Caco-2 (cell line): ENCODE measurements at regions of chr16 and their contacts with region 1.

Region 1: GRCh38 chr16:58025351-58026138 is at the start of gene MMP15:
- DNase-seq: peak; percentile 99 to 100
- H3K4me3 ChIP-seq: peak within 1 kb of the TSS; percentile 74
- H3K4me3 Mint-ChIP-seq: peak within 1 kb of the TSS; percentile 81
- H3K27ac Mint-ChIP-seq: peak within 1 kb of the TSS; percentile 95
- H3K4me1 ChIP-seq: peaks cover 16% of the 10 kb centered on the region
- H3K4me1 Mint-ChIP-seq: peaks cover 14% of the 10 kb centered on the region
- H3K27me3 ChIP-seq: no peaks in the 10 kb centered on the region
- H3K27me3 Mint-ChIP-seq: no peaks in the 10 kb centered on the region
- CTCF ChIP-seq: no peak
- total RNA-seq, gene MMP15: 27.0 and 27.3 TPM in 2 replicates

Region 2: GRCh38 chr16:57994778-57995177 is 30.8 kb before region 1 on chr16:
- CTCF ChIA-PET with region 1: interaction called, 13 read pairs
- POLR2A ChIA-PET with region 1: interaction called, 6 read pairs
- intact Hi-C with region 1: loop called (anchors 1 kb)
- DNase-seq: peak; percentile 72 to 77
- H3K4me3 ChIP-seq: no peak overlapping the region
- H3K4me3 Mint-ChIP-seq: no peak overlapping the region
- H3K27ac Mint-ChIP-seq: no peak overlapping the region
- H3K4me1 ChIP-seq: peaks cover 22% of the 10 kb centered on the region
- H3K4me1 Mint-ChIP-seq: peaks cover 18% of the 10 kb centered on the region
- H3K27me3 ChIP-seq: no peaks in the 10 kb centered on the region
- H3K27me3 Mint-ChIP-seq: no peaks in the 10 kb centered on the region
- CTCF ChIP-seq: peak; percentile 52 to 81

Region 3: DNA sequence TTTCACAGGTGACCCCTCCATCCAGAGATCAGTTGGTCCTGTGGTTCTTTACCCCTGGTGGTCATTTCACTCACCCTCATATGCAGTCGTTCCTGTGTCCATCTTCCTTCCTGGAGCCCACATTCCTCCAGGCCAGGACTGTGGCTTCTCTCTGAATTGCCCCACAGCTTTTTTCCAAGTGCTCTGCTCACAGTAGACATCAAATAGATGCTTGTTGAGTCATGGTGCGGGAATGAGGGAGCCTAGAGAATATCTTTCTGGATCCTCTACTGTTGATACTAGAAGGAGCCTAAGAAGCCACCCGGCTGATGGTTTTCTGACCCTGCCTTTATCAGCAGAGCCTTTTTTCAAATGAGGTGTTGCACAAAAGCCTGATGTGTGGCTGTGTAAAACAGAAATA is 13.9 kb before region 1 on chr16:
- CTCF ChIA-PET with region 1: interaction called, 15 read pairs
- POLR2A ChIA-PET with region 1: interaction called, 10 read pairs
- intact Hi-C with region 1: no loop called
- DNase-seq: no peak
- H3K4me3 ChIP-seq: no peak overlapping the region
- H3K4me3 Mint-ChIP-seq: no peak overlapping the region
- H3K27ac Mint-ChIP-seq: no peak overlapping the region
- H3K4me1 ChIP-seq: peaks cover 20% of the 10 kb centered on the region
- H3K4me1 Mint-ChIP-seq: peaks cover 14% of the 10 kb centered on the region
- H3K27me3 ChIP-seq: no peaks in the 10 kb centered on the region
- H3K27me3 Mint-ChIP-seq: no peaks in the 10 kb centered on the region
- CTCF ChIP-seq: no peak

Region 4: GRCh38 chr16:58121132-58121531 is 95.6 kb after region 1 on chr16:
- CTCF ChIA-PET with region 1: interaction called, 44 read pairs
- POLR2A ChIA-PET with region 1: interaction called, 25 read pairs
- intact Hi-C with region 1: loop called (anchors 1 kb)
- DNase-seq: no peak
- H3K4me3 ChIP-seq: no peak overlapping the region
- H3K4me3 Mint-ChIP-seq: no peak overlapping the region
- H3K27ac Mint-ChIP-seq: peak overlapping the region; percentile 29
- H3K4me1 ChIP-seq: peaks cover 38% of the 10 kb centered on the region
- H3K4me1 Mint-ChIP-seq: peaks cover 42% of the 10 kb centered on the region
- H3K27me3 ChIP-seq: no peaks in the 10 kb centered on the region
- H3K27me3 Mint-ChIP-seq: no peaks in the 10 kb centered on the region
- CTCF ChIP-seq: no peak

Region 5: DNA sequence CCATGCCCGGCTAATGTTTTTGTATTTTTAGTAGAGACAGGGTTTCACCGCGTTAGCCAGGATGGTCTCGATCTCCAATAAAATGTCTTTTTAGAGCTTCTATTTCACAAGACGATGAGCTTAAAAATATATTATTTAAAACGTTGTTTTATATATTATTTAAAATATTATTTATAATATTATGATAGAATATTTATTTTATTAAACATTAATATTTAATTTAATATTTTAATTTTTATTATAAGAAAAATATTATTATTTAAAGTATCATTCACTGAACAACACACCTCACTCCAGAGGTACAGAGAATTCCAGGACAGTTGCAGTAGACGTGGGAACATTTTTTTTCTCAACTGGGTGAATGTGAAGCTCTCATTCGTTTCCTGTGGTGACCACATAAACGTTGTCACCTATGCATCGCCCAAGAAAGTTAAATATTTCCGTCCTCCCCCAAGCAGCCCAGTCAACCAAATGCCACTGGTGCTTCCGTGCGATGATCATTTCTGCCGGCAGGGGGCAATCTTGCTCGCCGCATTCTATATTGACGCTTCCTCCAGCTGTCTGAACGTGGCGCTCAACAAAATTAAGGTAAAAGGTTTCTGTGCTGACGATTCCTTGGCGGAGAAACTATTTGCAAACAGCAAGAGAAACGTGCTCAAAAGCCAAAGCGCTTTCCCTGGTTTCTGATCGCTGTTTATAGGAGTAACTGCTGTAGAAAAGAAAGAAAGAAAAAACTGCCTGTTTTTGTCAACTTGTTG is 311.0 kb after region 1 on chr16:
- CTCF ChIA-PET with region 1: no interaction called
- POLR2A ChIA-PET with region 1: no interaction called
- intact Hi-C with region 1: loop called (anchors 5 kb)
- DNase-seq: peak; percentile 89 to 92
- H3K4me3 ChIP-seq: no peak overlapping the region
- H3K4me3 Mint-ChIP-seq: peak overlapping the region; percentile 48
- H3K27ac Mint-ChIP-seq: no peak overlapping the region
- H3K4me1 ChIP-seq: no peaks in the 10 kb centered on the region
- H3K4me1 Mint-ChIP-seq: no peaks in the 10 kb centered on the region
- H3K27me3 ChIP-seq: no peaks in the 10 kb centered on the region
- H3K27me3 Mint-ChIP-seq: no peaks in the 10 kb centered on the region
- CTCF ChIP-seq: peak; percentile 93 to 95